Left lung (tissue), 14 donors: ENCODE measurements at regions of chr2 and their contacts with region 1.

Region 1: GRCh38 chr2:239991689-239992314 is 33.3 kb downstream of the NDUFA10 start:
- DNase-seq: peak in 2 of 4 donors; percentile 48 to 60
- ATAC-seq: peak; percentile 85
- H3K4me3 ChIP-seq: no peak overlapping the region
- H3K27ac ChIP-seq: no peak overlapping the region
- H3K4me1 ChIP-seq: no peaks in the 10 kb centered on the region
- H3K27me3 ChIP-seq: no peaks in the 10 kb centered on the region
- CTCF ChIP-seq: peak; percentile 70 to 86

Region 2: GRCh38 chr2:239927424-239927981 is 64.3 kb before region 1 on chr2:
- intact Hi-C with region 1: loop called in 1 of 2 experiments (anchors 10 kb)
- DNase-seq: peak in 2 of 4 donors; percentile 51 to 82
- ATAC-seq: peak; percentile 87
- H3K4me3 ChIP-seq: no peak overlapping the region
- H3K27ac ChIP-seq: no peak overlapping the region
- H3K4me1 ChIP-seq: no peaks in the 10 kb centered on the region
- H3K27me3 ChIP-seq: no peaks in the 10 kb centered on the region
- CTCF ChIP-seq: no peak

Region 3: GRCh38 chr2:240095556-240096523 is 104.0 kb after region 1 on chr2:
- intact Hi-C with region 1: no loop called
- DNase-seq: peak in 1 of 4 donors; percentile 61
- ATAC-seq: no peak
- H3K4me3 ChIP-seq: no peak overlapping the region
- H3K27ac ChIP-seq: no peak overlapping the region
- H3K4me1 ChIP-seq: no peaks in the 10 kb centered on the region
- H3K27me3 ChIP-seq: peaks cover 44 to 73% of the 10 kb centered on the region in 2 donors
- CTCF ChIP-seq: no peak

Region 4: DNA sequence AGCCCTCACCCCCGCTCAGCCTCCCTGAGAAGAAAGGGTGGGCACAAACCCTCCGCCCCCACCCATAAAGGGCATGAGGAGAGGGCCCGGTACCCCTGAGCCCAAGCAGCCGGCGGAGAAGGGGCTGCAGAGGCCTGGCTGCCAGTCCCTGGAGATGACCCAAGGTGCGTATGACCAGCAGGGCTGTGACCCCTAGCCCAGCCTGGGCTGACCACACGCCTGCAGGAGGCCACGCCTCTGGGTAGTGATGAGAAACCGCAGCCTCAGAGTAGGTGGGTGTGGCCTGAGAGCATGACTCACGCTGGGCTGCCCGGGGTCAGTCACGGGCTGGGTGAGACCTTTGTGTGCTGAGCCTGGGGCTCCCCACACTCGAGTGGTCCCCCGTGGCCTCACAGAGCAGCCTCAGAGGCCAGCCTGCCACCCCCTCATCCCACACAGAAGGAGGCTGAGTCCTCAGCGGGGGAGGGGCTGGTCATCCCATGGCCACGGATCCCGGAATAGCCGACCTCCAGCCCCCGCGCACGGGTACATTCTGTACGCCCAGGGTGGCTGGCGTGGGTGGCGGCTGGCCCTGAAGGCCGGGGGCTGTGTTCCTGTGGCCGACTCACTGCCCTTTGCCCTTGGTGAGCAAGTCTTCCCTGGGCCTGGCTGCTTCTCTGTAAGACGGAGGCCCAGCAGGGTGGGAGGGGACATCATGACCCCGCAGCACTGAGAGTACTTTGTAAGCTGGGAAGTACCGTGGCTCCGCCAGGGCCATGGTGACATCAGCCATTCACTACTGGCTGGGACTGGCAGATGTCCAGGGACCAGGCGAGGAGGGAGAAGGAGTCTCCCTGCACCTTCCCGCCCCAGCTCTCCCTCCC is 259.4 kb after region 1 on chr2:
- intact Hi-C with region 1: no loop called
- DNase-seq: peak in 3 of 4 donors; percentile 85 to 91 (median 88)
- ATAC-seq: peak; percentile 94
- H3K4me3 ChIP-seq: peak overlapping the region in 1 of 2 donors; percentile 2
- H3K27ac ChIP-seq: peak overlapping the region; percentile 77 to 78
- H3K4me1 ChIP-seq: peaks cover 12 to 17% of the 10 kb centered on the region in 2 donors
- H3K27me3 ChIP-seq: peaks cover 0 to 7% of the 10 kb centered on the region in 2 donors
- CTCF ChIP-seq: no peak